ENCODE measurements at regions of chr5 and their contacts with region 1.

Region 1: DNA sequence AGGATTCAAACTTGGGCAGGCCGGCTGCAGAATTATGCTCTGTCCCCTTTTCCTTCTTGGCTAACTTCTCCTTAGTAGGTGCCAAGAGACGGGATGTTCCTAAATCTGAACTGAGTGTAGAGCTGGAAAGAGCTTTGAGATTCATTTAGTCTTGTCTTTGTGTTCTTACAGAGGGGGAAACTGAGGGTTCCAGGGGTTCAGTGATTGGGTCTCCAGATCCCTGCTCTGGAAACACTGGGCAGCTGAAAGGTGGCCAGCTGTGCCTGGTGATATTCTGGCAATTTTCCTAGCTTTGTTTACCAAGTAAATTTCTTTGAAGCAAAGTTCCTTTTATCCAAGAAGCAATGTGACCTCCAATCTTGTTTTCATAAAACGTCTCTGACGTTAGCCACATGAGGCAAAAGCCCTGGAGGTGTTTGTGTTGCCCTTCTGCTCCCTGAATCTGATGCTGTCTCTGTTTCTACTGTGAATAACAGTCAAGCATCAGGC is 288.7 kb downstream of the ZSWIM6 start:
- DNase-seq: no peak
- H3K4me3 ChIP-seq: peak overlapping the region in 2 of 59 donors; percentile 2 to 5
- H3K27ac ChIP-seq: peak overlapping the region; percentile 77 to 99 (median 96)
- H3K27me3 ChIP-seq: no peaks in the 10 kb centered on the region
- CTCF ChIP-seq: no peak

Region 2: DNA sequence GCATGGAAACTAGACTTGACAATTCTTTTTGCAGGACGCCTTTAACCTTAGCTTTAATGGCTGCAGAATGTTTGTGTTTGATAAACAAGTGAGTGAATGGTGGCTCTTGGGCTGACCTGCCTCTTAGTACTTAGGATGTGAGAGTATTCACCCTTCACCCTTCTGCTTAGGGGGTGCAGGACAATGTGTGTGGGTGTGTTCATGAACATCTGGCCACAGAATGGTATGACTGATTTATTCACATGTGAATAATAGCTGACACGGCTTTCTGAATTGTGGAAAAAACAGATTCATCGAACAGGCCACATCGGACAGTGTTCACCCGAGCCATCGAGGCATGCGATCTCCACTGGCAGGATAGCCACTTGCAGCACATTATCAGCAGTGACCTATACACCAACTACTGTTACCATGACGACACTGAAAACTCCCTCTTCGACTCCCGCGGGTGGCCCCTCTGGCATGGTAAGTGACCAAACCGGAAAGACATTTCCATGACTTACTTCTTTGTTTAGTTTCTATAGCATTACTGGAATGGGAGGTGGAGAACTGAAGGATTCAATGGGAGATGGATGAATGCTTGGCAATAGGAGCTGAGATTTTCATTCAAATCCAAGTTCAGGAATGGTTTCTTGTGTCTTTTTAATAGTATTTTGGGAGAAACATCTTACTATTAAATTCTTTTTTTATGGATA is 95.1 kb before region 1 on chr5:
- intact Hi-C with region 1: loop called in 1 of 2 experiments (anchors 5 kb)
- DNase-seq: no peak
- H3K4me3 ChIP-seq: peak overlapping the region in 1 of 59 donors; percentile 5
- H3K27ac ChIP-seq: peak overlapping the region in 16 of 59 donors; percentile 1 to 49 (median 23)
- H3K27me3 ChIP-seq: no peaks in the 10 kb centered on the region
- CTCF ChIP-seq: no peak

Region 3: DNA sequence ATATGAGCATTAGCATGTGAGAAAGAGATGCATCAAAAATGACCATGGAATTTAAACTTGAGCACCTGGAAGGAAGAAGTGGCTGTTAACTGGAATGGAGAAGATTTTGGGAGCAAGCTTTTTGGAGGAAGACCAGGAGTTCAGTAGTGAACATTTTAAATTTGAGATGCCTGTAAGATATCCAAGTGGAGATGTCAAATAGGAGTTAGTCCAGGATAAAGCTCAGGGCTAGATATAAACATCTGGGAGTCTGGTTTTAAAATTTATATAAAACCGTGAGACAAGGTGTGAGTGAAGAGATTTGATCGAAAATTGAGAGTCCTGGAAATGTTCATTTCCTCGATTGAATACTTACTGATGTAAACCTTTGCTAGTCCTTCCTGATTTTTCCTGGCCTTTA is 71.2 kb before region 1 on chr5:
- intact Hi-C with region 1: loop called in 1 of 2 experiments (anchors 10 kb)
- DNase-seq: no peak
- H3K4me3 ChIP-seq: no peak overlapping the region
- H3K27ac ChIP-seq: peak overlapping the region in 2 of 59 donors; percentile 4 to 18
- H3K27me3 ChIP-seq: no peaks in the 10 kb centered on the region
- CTCF ChIP-seq: no peak

Region 4: GRCh38 chr5:61582205-61582820 is 38.4 kb before region 1 on chr5:
- intact Hi-C with region 1: no loop called
- DNase-seq: no peak
- H3K4me3 ChIP-seq: no peak overlapping the region
- H3K27ac ChIP-seq: no peak overlapping the region
- H3K27me3 ChIP-seq: peaks cover 0 to 5% (median 0%) of the 10 kb centered on the region in 45 donors
- CTCF ChIP-seq: no peak

Region 5: GRCh38 chr5:61687371-61687770 is 66.6 kb after region 1 on chr5:
- intact Hi-C with region 1: no loop called
- DNase-seq: no peak
- H3K4me3 ChIP-seq: no peak overlapping the region
- H3K27ac ChIP-seq: no peak overlapping the region
- H3K27me3 ChIP-seq: no peaks in the 10 kb centered on the region
- CTCF ChIP-seq: no peak

Region 6: DNA sequence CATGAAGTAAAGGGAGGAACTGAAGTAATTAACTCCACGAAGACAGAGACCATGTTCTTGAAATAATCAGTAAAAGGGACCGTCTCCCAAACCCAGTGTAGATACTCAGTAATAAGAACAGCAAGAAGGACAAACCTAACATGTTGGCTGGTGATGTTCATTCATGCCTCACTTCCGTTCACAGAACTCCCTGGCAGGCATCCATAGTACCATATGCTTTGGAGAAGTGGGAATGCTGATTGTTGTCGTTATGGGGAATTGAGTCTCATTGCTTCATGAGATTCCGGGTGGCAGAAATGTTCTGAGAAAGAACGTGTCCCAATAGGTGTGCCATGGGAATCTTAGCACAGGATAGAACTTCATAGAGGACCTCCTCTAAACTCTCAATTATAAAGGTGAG is 163.6 kb after region 1 on chr5:
- intact Hi-C with region 1: no loop called
- DNase-seq: peak in 1 of 10 donors; percentile 27
- H3K4me3 ChIP-seq: no peak overlapping the region
- H3K27ac ChIP-seq: no peak overlapping the region
- H3K27me3 ChIP-seq: peaks cover 0 to 4% (median 0%) of the 10 kb centered on the region in 45 donors
- CTCF ChIP-seq: no peak

Region 7: GRCh38 chr5:61817472-61818326 is 197.0 kb after region 1 on chr5:
- intact Hi-C with region 1: no loop called
- DNase-seq: peak; percentile 31 to 82 (median 72)
- H3K4me3 ChIP-seq: peak overlapping the region in 2 of 59 donors; percentile 13 to 14
- H3K27ac ChIP-seq: peak overlapping the region in 2 of 59 donors; percentile 6 to 10
- H3K27me3 ChIP-seq: peaks cover 0 to under 1% (median 0%) of the 10 kb centered on the region in 45 donors
- CTCF ChIP-seq: peak; percentile 40 to 87 (median 74)

Measured in dorsolateral prefrontal cortex (tissue), 120 donors.